Natural killer cell (primary cell): ENCODE measurements at regions of chr15 and their contacts with region 1.

Region 1: DNA sequence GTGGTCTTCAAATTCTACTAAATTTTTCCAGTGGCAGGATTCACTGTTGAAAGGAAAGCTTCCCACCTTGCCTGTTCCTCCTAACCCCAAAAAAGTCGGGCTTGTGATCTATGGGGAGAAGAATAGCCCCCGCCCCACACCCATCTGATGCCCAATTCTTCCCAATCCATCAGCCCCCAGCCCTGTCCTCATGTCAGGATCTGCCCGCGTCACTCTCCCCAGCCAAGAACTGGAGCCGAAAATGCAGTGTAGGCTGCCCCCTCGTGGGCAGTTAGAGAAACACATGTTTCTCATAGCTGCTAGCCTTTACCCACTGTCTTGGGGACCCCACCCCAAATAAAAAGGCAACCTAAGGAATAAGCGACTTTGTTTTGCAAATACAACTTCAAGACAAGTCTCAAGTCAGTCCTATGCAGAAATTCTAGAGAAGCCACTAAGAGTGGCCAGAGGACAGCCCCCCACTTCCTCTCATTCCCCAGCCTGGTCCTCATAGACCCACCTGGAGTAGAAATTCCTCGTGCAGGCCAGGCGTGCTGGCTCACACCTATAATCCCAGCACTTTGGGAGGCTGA is 13.0 kb upstream of the CSK start:
- DNase-seq: peak; percentile 53 to 80
- ATAC-seq: peak; percentile 60 to 68 (median 65)
- H3K4me3 ChIP-seq: no peak overlapping the region
- H3K4me3 Mint-ChIP-seq: no peak overlapping the region
- H3K27ac ChIP-seq: no peak overlapping the region
- H3K27ac Mint-ChIP-seq: peak overlapping the region in 1 of 2 donors; percentile 35
- H3K4me1 ChIP-seq: peaks cover 26% of the 10 kb centered on the region
- H3K4me1 Mint-ChIP-seq: peaks cover 6 to 11% of the 10 kb centered on the region in 2 donors
- H3K27me3 ChIP-seq: no peaks in the 10 kb centered on the region
- H3K27me3 Mint-ChIP-seq: peaks cover 7 to 11% of the 10 kb centered on the region in 2 donors
- CTCF ChIP-seq: peak; percentile 82

Region 2: DNA sequence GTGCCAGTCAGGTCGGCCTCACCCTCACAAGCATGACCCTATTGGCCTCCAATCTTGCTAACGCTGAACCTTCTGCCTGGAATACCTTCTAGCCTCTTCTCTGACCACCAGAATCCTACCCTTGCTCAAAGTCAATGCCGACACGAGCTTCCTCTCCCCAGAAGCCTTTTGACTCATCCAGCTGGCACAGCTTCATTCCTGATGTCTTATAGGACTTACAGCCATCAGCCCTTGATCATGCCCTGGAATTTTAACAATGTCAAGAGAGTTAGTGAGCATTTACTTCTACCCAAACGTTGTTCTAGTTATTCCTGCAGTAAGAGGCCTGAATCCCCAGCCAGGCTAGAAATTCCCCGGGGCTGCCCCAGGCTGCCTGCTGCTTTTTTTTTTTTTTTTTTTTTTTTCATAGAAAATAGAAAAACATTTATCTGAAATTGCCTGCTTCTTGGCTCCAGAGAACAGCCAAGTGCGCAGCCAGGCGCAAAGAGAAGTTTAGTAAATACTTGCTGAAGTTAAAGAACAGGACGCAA is 16.3 kb before region 1 on chr15:
- intact Hi-C with region 1: no loop called
- DNase-seq: no peak
- ATAC-seq: no peak
- H3K4me3 ChIP-seq: no peak overlapping the region
- H3K4me3 Mint-ChIP-seq: no peak overlapping the region
- H3K27ac ChIP-seq: no peak overlapping the region
- H3K27ac Mint-ChIP-seq: no peak overlapping the region
- H3K4me1 ChIP-seq: no peaks in the 10 kb centered on the region
- H3K4me1 Mint-ChIP-seq: no peaks in the 10 kb centered on the region
- H3K27me3 ChIP-seq: no peaks in the 10 kb centered on the region
- H3K27me3 Mint-ChIP-seq: no peaks in the 10 kb centered on the region
- CTCF ChIP-seq: no peak

Region 3: DNA sequence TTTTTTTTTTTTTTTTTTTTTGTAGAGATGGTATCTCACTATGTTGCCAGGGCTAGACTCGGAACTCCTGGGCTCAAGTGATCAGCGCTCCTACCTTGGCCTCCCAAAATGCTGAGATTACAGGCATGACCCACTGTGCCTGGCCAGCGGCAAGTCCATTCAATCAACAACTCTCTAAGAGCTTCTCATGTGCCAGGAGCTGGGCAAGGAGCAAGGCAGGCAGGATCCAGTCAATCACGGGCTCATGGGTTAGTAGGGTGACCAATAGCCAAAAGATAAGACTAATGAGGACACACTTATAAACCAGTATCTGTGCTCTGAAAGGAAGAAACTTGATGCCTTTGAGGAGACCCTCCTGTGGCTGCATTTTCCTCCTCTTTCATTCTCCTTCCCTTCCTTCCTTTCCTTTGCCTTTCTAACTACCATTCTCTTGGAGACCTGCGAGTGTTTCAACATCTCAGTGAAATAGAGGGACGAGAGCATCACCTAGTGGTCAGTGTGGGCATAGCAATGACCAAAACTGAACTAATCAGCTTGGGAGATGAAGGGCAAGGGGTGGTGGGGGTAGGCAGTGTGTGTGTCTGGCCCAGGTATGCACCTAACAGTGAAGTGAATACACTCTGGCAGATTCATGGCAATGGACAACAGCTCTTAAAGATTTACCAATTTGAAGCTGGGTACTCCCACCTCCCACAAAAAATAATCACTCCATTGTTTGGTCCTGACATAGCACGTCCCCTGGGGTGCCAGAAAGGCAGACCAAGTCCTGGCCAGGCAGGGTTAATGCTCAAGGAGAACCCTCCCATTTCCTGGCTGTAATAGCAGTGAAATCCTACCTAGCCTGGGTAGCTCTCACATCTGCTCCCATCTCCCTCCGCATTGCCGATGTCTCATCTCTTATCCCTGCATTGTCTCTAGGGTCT is 181.5 kb after region 1 on chr15:
- intact Hi-C with region 1: loop called (anchors 1 kb)
- DNase-seq: peak; percentile 69 to 90
- ATAC-seq: peak; percentile 88 to 99 (median 97)
- H3K4me3 ChIP-seq: no peak overlapping the region
- H3K4me3 Mint-ChIP-seq: no peak overlapping the region
- H3K27ac ChIP-seq: no peak overlapping the region
- H3K27ac Mint-ChIP-seq: no peak overlapping the region
- H3K4me1 ChIP-seq: no peaks in the 10 kb centered on the region
- H3K4me1 Mint-ChIP-seq: peaks cover 0 to 4% of the 10 kb centered on the region in 2 donors
- H3K27me3 ChIP-seq: no peaks in the 10 kb centered on the region
- H3K27me3 Mint-ChIP-seq: peaks cover 0 to 4% of the 10 kb centered on the region in 2 donors
- CTCF ChIP-seq: peak; percentile 91